ENCODE measurements at regions of chr14 and their contacts with region 1.

Region 1: GRCh38 chr14:103808403-103809001 is 38.9 kb downstream of the PPP1R13B start:
- DNase-seq: peak; percentile 71

Region 2: DNA sequence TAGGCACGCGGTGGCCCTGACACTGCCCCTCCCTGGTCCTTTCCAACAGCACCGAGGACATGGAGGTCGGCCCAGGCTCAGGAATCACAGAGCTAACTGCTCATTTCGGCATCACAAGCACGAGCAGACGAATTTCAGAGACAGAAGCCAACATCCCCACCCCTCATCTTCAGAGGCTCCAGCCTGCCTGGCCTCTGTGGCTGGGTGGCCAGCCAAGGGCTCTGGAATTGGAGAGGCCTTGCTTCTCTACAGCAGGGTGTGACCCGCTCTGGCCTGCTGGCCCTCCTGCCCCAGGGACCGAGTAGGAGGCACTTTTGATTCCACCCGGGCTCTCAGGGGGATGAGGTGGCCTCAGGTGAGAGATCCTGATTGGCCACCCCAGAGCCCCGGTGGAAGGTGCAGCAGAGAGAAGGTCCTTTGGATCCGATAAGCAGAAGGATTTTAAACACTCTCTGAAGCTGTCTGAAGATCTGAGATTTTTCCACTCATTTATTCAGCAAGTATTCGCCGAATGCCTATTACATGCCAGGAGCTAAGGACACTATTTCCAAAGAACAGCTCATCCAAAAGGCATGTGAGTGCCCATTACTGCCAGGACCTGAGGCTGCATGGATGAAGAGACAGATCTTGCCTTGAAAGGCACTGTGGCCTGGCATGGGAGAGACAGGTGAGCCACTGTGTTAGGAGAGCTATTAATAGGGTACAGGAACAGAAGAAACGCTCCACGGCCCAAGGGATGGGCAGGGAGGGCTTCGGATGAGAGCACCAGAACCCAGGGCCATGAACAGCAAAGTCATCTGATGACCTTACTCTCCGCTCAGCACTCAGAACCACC is 256.3 kb before region 1 on chr14:
- CTCF ChIA-PET with region 1: interaction called, 12 read pairs
- POLR2A ChIA-PET with region 1: no interaction called
- DNase-seq: no peak

Region 3: DNA sequence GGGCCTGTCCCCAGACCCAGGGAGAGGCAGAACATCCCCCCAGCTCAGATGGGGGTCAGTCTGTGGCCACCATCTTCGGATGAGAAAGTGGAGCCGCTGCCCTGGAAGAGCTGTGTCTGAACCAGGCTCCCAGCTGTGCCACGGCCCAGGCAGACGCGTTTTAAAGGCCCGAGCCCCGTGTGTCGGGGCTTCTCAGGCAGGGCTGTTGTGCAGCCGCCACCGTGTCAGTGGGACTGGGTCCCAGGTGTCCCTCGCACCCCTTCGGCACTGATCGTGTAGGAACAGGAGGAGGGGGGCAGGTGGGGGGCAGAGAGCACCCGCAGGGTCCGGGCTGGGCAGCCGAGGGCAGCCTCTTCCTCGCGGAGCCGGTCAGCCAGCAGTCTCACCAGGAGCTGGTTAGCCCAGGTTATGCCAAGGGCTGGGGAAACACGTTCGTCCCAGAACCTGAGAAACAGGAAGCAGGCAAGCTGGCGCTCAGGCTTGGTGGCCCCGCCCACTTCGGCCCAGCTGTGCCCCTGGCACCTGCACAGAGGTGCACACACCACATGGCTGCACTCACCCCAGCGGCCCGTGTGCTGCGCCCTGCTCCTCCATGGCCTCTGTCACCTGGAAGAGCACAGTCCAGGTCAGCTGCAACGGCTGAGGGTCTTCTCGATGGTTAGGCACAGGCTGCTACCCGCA is 109.8 kb before region 1 on chr14:
- CTCF ChIA-PET with region 1: interaction called, 11 read pairs
- POLR2A ChIA-PET with region 1: no interaction called
- DNase-seq: no peak

Region 4: DNA sequence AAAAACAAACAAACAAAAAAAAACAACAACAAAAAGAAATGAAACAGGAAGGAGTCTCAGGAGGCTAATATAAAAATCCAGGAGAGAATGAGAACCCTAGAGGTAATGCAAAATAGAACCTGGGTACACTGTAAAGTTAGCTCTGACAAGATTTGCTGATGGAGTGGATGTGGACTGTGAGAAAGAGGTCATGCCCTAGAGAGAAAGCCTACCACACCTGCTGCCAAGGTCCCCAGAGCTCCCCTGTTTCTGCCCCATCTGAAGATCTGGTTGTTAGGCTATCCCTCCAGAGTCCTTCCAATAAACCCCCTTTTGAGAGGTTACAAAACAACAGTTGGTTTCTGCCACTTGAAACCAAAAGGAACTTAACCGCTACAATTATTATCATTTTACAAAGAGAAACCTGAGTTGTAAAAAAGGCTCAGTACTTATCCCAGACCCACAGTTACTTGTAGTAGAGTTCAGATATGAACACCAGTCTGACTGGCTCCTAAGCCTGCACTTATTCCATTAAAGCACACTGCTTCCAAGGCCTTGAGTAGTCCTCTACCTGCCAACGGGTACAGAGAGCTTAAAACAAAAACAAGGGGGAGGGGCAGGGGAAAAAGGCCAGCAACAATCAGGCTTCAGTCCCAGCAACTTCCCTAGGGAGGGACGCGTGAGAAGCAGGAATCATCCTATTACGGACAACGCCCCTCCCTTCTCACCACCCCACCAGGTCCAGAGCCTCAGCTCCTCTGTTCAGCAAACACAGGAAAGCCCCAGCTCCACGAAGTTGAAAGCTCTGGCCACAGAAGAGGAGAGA is 11.2 kb after region 1 on chr14:
- CTCF ChIA-PET with region 1: interaction called, 16 read pairs
- POLR2A ChIA-PET with region 1: no interaction called
- DNase-seq: peak; percentile 61

Region 5: DNA sequence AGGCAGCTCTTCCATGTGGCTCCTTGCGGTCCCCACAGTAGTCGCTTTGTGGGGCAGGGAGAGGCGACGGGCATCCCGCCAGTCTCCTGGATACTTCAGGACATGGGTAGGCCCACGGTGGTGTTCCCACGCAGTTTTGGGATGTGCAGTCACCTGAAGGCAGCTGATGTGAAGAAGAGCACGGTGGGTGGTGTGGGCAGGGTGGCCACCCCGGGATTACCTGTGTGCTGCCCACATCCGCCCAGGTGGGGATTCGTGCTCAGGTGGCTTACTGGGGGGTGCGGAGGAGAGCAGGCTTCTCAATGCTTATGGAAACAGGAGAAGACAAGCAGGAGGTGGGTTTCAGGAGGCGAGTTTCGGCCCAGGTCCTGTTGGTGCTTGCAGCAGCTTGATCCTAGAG is 91.3 kb after region 1 on chr14:
- CTCF ChIA-PET with region 1: interaction called, 17 read pairs
- POLR2A ChIA-PET with region 1: no interaction called
- DNase-seq: no peak

Region 6: DNA sequence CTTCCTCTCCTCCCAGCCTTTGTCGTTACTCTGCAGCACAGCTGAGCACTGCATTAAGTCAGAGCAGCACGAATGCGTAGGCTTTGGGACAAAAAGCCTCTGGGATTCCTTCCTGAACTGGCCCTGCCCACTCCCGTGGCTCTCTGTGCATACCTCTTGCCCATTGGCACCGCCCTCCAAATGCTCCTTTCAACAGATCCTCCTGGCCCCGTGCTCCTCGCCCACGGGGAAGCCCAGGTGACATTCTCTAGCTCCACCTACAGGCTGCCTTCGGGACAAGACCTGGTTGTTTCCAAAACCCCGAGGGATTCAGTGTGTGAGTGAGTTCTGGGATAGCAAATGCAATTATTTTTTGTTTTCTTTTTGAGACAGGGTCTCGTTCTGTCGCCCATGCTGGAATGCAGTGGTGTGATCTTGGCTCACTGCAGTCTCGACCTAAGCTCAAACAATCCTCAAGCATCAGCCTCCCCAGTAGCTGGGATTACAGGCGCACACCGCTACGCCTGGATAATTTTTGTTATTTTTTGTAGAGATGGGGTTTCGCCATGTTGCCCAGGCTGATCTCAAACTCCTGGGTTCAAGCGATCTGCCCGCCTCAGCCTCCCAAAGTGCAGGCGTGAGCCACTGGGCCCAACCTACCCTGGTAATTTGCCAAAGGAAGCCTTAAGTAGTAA is 101.9 kb after region 1 on chr14:
- CTCF ChIA-PET with region 1: interaction called, 16 read pairs
- POLR2A ChIA-PET with region 1: no interaction called
- DNase-seq: peak; percentile 79

Measured in HEK293T (cell line).